MCF 10A (cell line): ENCODE measurements at regions of chr10 and their contacts with region 1.

Region 1: DNA sequence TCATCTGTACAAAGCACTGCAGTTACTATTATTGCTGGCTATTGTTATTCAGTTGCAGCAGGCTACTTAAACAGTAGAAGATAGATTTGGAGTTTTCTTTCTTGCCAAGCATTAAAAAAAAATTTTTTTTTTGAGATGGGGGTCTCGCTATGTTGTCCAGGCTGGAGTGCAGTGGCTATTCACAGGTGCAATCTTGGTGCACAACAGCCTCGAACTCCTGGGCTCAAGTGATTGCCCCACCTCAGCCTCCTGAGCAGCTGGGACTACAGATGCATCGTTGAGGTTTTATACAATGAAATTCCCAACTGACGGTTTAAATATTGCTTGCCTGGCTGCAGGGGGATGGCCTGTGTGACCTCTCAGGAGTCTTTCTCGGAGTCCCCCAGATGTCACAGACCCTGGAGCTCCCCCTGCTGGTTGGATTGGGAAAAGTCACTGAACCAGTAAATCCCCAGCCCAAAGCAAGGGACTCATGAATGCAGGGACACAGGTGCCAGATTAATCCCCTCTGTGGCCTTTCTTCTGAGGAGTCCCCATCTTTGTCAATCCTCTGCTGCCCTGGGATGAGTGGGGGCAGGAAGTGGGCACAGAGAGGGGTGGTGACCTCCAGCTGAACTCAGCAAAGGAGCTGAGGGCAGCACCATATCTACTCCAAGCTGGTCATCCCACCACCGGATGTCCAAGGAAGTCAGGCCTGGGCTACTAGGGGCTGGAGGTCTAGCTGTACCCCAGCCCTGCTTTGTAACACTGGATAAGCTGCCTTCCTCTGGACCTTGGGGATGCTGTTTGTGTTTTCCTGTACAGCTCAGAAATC is 149.6 kb downstream of the C10orf105 start:
- DNase-seq: peak; percentile 73
- H3K4me3 Mint-ChIP-seq: no peak overlapping the region
- H3K27ac Mint-ChIP-seq: no peak overlapping the region
- H3K4me1 Mint-ChIP-seq: no peaks in the 10 kb centered on the region
- H3K27me3 Mint-ChIP-seq: peaks cover 19% of the 10 kb centered on the region
- CTCF ChIP-seq: peak; percentile 74

Region 2: GRCh38 chr10:71383972-71384687 is 185.9 kb before region 1 on chr10:
- CTCF ChIA-PET with region 1: interaction called, 78 read pairs
- POLR2A ChIA-PET with region 1: no interaction called
- intact Hi-C with region 1: loop called (anchors 1 kb)
- DNase-seq: peak; percentile 58
- H3K4me3 Mint-ChIP-seq: no peak overlapping the region
- H3K27ac Mint-ChIP-seq: no peak overlapping the region
- H3K4me1 Mint-ChIP-seq: no peaks in the 10 kb centered on the region
- H3K27me3 Mint-ChIP-seq: peaks cover 15% of the 10 kb centered on the region
- CTCF ChIP-seq: peak; percentile 92

Region 3: DNA sequence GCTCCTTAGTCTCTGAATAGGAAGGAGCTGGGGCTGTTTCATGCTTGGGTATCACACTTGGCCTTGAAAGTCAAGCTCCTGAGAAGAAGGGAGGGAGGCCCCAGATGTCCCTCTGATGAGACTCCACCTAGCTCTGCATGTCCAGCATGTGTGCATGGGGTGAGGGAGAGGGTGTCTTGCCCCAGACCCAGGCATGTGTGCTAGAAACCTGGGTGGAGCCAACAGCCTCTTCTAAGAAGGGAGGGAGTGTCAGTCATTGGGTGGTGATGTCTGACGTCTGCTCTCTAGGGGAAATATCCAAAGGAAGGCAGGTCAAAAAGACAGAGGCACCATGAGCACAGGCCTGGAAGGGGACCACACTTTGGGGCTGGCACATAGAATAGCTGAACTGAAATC is 14.3 kb before region 1 on chr10:
- CTCF ChIA-PET with region 1: interaction called, 24 read pairs
- POLR2A ChIA-PET with region 1: interaction called, 3 read pairs
- intact Hi-C with region 1: no loop called
- DNase-seq: no peak
- H3K4me3 Mint-ChIP-seq: no peak overlapping the region
- H3K27ac Mint-ChIP-seq: no peak overlapping the region
- H3K4me1 Mint-ChIP-seq: no peaks in the 10 kb centered on the region
- H3K27me3 Mint-ChIP-seq: peaks cover 68% of the 10 kb centered on the region
- CTCF ChIP-seq: no peak

Region 4: DNA sequence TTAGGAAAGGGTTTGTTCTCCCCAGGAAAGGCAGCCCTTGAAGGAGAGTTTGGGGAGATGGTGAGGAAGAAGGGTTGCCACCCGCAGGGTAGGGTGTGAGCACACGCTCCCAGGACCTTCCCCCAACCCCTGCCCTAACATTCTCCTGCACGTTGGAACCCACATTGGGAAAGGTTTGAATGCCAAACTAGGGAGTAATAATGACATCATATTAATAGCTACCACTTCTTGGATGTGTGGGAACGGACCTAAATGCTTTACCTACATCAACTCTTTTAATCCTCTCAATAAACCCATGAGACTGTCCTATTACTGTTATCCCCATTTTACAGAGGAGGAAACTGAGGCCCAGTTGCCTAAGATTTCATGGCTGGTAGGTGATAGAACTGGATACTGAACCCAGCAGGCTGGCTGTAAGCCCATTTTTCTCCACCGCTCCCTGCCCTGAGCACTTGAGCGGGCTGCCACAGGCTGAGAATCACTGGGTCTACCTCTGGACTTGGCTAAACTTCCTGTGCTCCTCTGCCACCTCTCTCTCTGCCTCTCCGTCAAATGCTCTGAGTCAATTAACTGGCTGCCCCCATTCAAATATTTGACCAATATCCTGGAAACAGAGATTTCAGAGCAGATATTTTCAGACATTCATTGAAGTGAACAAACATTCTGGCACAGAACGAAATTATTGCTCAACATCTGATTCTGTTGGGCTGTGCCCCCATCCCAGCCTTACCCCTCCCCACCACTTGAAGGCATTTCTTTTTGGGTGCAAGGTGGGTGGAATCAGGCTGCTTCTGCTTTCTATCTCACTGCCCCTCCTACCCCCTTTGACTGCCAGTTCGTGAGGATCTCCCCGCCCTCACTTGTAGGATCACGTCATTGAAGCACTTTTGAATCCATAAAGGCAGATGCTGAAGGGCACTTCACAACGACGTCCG is 19.9 kb after region 1 on chr10:
- CTCF ChIA-PET with region 1: interaction called, 12 read pairs
- POLR2A ChIA-PET with region 1: interaction called, 4 read pairs
- intact Hi-C with region 1: no loop called
- DNase-seq: no peak
- H3K4me3 Mint-ChIP-seq: no peak overlapping the region
- H3K27ac Mint-ChIP-seq: no peak overlapping the region
- H3K4me1 Mint-ChIP-seq: no peaks in the 10 kb centered on the region
- H3K27me3 Mint-ChIP-seq: peaks cover 36% of the 10 kb centered on the region
- CTCF ChIP-seq: no peak